ENCODE measurements at regions of chr9 and their contacts with region 1.

Region 1: GRCh38 chr9:111648066-111648465 is 13.3 kb upstream of the GNG10 start:
- DNase-seq: no peak
- ATAC-seq: no peak

Region 2: DNA sequence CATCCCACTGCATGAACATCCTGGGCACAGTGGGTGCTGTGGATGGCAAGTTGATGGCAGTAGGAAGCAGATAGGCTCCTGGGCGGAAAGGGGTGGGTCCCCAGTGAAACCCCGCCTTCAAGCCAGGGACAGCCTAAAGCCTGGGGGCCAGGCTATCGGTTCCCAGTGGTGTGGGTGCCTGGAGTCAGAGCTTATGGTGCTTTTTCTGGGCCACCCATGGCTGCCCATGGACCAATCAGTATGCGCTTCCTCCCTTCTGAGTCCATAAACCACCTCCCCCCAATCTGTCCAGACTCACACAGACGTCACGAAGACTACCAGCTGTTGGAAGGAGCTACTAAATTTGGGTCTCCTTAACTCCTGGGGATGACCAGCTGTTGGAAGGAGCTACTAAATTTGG is 146.4 kb before region 1 on chr9:
- intact Hi-C with region 1: loop called in 1 of 2 experiments (anchors 5 kb)
- DNase-seq: no peak
- ATAC-seq: no peak

Region 3: DNA sequence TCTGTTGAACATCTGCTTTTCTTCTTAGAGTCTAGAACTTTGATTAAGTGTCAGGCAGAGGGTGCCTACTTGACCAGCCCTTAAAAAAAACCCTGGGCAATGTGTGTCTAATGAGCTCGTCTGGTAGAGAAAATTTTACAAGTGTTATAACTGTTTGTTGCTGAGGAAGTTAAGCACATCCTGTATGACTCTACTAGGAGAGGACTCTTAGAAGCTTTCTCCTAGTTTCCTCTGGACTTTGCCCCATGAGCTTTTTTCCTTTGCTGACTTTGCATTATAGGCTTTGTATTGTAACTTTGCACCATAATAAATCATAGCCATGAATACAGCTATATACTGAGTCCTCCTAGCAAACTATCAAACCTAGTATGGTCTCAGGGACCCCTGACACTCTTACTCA is 52.7 kb after region 1 on chr9:
- intact Hi-C with region 1: no loop called
- DNase-seq: peak in 1 of 2 donors; percentile 26
- ATAC-seq: peak; percentile 96

Measured in left colon (tissue), 2 donors.